ENCODE measurements at regions of chr1 and their contacts with region 1.

Region 1: DNA sequence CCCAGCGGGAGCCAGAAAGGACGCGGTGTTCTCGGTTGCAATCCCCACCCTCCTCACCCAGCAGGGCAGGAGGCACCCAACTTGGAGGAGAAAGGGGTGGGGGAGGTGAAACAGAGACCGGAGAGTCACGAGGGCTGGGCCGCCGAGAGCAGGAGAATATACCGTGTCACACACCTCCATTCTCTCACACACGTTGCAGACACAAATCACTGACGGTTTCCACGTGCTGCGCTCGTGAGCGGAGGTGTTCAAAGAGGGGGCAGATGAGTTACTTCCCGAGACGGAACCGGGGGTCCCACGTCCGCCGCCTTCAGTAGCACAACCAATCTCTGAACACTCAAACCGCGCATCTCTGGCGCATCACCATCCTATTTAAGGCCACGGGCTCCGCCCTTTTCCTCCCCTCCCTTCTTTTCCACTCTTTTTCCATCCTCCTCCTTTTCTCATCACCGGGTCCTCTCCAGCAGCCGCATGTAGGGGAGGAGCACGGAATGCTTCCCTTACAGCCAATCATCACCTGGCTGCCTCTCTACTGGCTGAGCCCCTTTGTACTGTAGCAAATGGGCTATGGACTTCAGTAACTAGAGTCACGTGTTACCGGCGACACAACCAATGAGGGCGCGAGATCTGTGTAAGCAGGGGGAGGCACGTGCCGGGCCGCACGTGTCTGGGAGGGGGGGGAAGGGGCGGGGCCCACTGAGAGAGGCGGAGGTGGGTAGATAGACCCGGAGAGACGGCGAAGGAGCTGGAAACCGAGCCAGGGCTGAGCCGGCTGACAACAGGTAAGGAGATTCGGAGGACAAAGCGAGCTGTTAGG is at the start of gene CIART:
- DNase-seq: peak; percentile 100
- ATAC-seq: peak; percentile 98
- H3K4me3 ChIP-seq: peak within 1 kb of the TSS; percentile 58
- H3K27ac ChIP-seq: peak within 1 kb of the TSS; percentile 24
- H3K4me1 ChIP-seq: peaks cover 5% of the 10 kb centered on the region
- H3K27me3 ChIP-seq: no peaks in the 10 kb centered on the region
- CTCF ChIP-seq: no peak
- POLR2A ChIP-seq: peak; percentile 63
- RAD21 ChIP-seq: no peak
- total RNA-seq, gene CIART: 13.9 and 18.1 TPM in 2 replicates

Region 2: DNA sequence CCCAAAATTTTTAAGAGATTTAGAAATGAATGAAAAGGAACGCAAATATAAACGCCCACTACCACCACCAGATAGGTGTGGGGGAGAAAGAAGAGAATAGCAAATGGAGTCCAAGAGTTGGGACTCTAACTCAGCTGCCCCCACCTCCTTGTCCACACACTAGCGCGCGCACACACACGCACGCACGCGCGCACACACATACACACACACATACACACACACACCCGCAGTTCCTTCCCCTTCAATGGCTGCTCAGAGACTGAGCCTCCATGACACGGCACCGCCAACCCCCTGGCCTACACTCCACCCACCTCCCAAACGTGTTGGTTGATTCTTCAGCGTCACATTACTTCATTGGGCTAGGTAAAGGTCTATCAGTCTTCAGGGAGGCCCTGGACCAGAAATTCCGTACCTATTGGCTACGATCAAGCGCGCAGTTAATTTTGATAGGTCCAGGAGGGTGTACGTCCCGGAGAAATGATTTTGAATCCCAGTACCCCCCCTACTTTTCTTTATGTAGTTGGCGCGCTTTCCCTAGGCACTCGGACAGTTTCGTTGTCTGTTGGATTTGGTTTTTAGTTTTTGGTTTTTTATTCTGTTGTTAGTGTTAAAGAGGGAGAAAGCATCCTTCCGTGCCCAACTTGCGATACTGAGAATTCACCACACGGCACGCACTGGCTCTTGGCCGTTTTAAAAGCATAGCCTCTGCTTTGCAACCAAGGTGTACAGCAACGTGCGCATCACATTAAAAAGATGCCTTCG is 46.0 kb before region 1 on chr1 and contains the start of gene ANP32E:
- CTCF ChIA-PET with region 1: no interaction called
- POLR2A ChIA-PET with region 1: no interaction called
- dilution Hi-C with region 1: no loop called
- in situ Hi-C with region 1: no loop called
- intact Hi-C with region 1: loop called (anchors 5 kb)
- DNase-seq: peak; percentile 100
- ATAC-seq: peak; percentile 94
- H3K4me3 ChIP-seq: peak within 1 kb of the TSS; percentile 67
- H3K27ac ChIP-seq: peak within 1 kb of the TSS; percentile 84
- H3K4me1 ChIP-seq: 0 out of 2 replicates have a peak, but pooled peaks cover 3% of the 10 kb centered on the region
- H3K27me3 ChIP-seq: no peaks in the 10 kb centered on the region
- CTCF ChIP-seq: 0 out of 2 replicates have a peak, but pooled peaks have one; percentile 3
- POLR2A ChIP-seq: peak; percentile 96
- RAD21 ChIP-seq: no peak
- total RNA-seq, gene ANP32E: 5.9 and 30.0 TPM in 2 replicates

Measured in IMR-90 (cell line).